Activated CD4-positive, alpha-beta memory T cell treated with anti-CD3 and anti-CD28 coated beads, Interleukin-2, amount 10 ng/mL, durations not matched to agents 7 days and 5 days (primary cell): ENCODE measurements at regions of chr19 and their contacts with region 1.

Region 1: GRCh38 chr19:18588611-18589379 is at the start of gene REX1BD:
- DNase-seq: peak; percentile 83
- H3K4me3 Mint-ChIP-seq: peak within 1 kb of the TSS; percentile 85
- H3K27ac Mint-ChIP-seq: peak within 1 kb of the TSS; percentile 90
- H3K4me1 Mint-ChIP-seq: peaks cover 49% of the 10 kb centered on the region
- H3K27me3 Mint-ChIP-seq: peaks cover 2% of the 10 kb centered on the region
- total RNA-seq, gene REX1BD: 81.2 to 83.3 TPM

Region 2: GRCh38 chr19:18503971-18504885 is 84.6 kb before region 1 on chr19:
- CTCF ChIA-PET with region 1: interaction called, 9 read pairs
- POLR2A ChIA-PET with region 1: interaction called, 11 read pairs
- DNase-seq: no peak
- H3K4me3 Mint-ChIP-seq: no peak overlapping the region
- H3K27ac Mint-ChIP-seq: peak overlapping the region; percentile 35
- H3K4me1 Mint-ChIP-seq: peaks cover 93% of the 10 kb centered on the region
- H3K27me3 Mint-ChIP-seq: no peaks in the 10 kb centered on the region

Region 3: GRCh38 chr19:18533058-18533457 is 55.7 kb before region 1 on chr19:
- CTCF ChIA-PET with region 1: no interaction called
- POLR2A ChIA-PET with region 1: no interaction called
- DNase-seq: no peak
- H3K4me3 Mint-ChIP-seq: no peak overlapping the region
- H3K27ac Mint-ChIP-seq: no peak overlapping the region
- H3K4me1 Mint-ChIP-seq: no peaks in the 10 kb centered on the region
- H3K27me3 Mint-ChIP-seq: no peaks in the 10 kb centered on the region

Region 4: DNA sequence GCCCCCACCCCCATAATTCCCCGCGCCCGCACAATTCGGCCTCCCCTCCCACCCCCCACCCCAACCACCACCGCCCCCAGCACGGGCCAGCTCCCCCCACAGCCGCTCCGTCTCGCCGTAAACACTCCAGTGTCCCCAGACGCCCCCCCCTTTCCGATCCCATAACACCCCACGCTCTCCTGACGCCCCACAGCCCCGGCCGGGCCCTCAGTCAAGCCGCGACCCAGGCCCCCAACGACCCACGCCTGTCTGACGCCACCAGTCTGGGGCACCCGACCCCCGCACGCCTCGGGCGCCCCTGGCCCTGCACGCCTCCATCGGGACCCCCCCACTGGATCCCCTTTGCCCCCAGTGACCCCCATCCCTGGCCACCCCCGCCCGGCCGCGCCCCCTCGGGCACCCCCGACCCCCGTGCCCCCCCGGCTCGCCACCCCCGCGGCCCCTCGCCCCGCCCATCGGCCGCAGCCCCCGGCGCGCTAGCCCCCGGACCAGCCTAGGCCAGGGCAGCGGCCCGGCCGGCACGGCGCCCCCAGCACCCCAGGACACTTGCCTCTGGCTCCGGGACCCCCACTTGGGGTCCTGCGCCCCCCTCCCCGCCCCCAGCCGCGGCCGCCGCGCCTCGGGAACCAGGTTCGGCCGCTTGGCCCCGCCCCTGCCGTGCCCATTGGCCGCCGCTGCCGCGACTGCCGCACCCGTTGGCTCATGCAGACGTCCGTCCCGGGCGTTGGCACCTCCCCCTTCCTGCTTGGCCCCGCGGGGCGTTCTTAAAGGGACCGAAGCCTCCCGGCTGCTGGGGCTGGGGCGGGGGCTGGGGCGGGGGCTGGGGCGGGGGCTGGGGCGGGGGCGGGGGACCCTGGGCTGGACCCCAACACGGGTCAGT is 45.6 kb before region 1 on chr19 and contains the start of gene FKBP8:
- CTCF ChIA-PET with region 1: interaction called, 30 read pairs
- POLR2A ChIA-PET with region 1: interaction called, 38 read pairs
- DNase-seq: peak; percentile 96
- H3K4me3 Mint-ChIP-seq: peak within 1 kb of the TSS; percentile 95
- H3K27ac Mint-ChIP-seq: peak within 1 kb of the TSS; percentile 98
- H3K4me1 Mint-ChIP-seq: peaks cover 31% of the 10 kb centered on the region
- H3K27me3 Mint-ChIP-seq: no peaks in the 10 kb centered on the region
- total RNA-seq, gene FKBP8: 263 TPM

Region 5: GRCh38 chr19:18571564-18572300 is 17.1 kb before region 1 on chr19 and contains the start of gene UBA52:
- CTCF ChIA-PET with region 1: interaction called, 63 read pairs
- POLR2A ChIA-PET with region 1: interaction called, 114 read pairs
- DNase-seq: peak; percentile 99
- H3K4me3 Mint-ChIP-seq: peak within 1 kb of the TSS; percentile 91
- H3K27ac Mint-ChIP-seq: peak within 1 kb of the TSS; percentile 90
- H3K4me1 Mint-ChIP-seq: peaks cover 35% of the 10 kb centered on the region
- H3K27me3 Mint-ChIP-seq: no peaks in the 10 kb centered on the region
- total RNA-seq, gene UBA52: 1,374 to 1,409 TPM

Region 6: GRCh38 chr19:18846862-18847548 is 258.2 kb after region 1 on chr19:
- CTCF ChIA-PET with region 1: interaction called, 14 read pairs
- POLR2A ChIA-PET with region 1: interaction called, 3 read pairs
- DNase-seq: peak; percentile 72
- H3K4me3 Mint-ChIP-seq: no peak overlapping the region
- H3K27ac Mint-ChIP-seq: no peak overlapping the region
- H3K4me1 Mint-ChIP-seq: peaks cover 79% of the 10 kb centered on the region
- H3K27me3 Mint-ChIP-seq: no peaks in the 10 kb centered on the region